Psoas muscle (tissue), 8 donors: ENCODE measurements at regions of chr18 and their contacts with region 1.

Region 1: GRCh38 chr18:24885276-24885675 is 424.8 kb downstream of the HRH4 start:
- DNase-seq: no peak
- ATAC-seq: no peak
- H3K4me3 ChIP-seq: no peak overlapping the region
- H3K27ac ChIP-seq: no peak overlapping the region
- H3K4me1 ChIP-seq: no peaks in the 10 kb centered on the region
- H3K27me3 ChIP-seq: no peaks in the 10 kb centered on the region
- CTCF ChIP-seq: no peak

Region 2: GRCh38 chr18:25164848-25165811 is 279.9 kb after region 1 on chr18:
- intact Hi-C with region 1: loop called in 1 of 2 experiments (anchors 10 kb)
- DNase-seq: no peak
- ATAC-seq: peak; percentile 56 to 76 (median 70)
- H3K4me3 ChIP-seq: peak overlapping the region; percentile 57
- H3K27ac ChIP-seq: peak overlapping the region; percentile 1
- H3K4me1 ChIP-seq: peaks cover 27% of the 10 kb centered on the region
- H3K27me3 ChIP-seq: no peaks in the 10 kb centered on the region
- CTCF ChIP-seq: peak; percentile 10